Activated B cell treated with CpG ODN at 0.5 μM for 24 hours (primary cell): ENCODE measurements at regions of chr1 and their contacts with region 1.

Region 1: GRCh38 chr1:185990565-185990964 is 256.4 kb downstream of the HMCN1 start:
- DNase-seq: no peak
- ATAC-seq: no peak
- H3K4me3 Mint-ChIP-seq: no peak overlapping the region
- H3K27ac Mint-ChIP-seq: no peak overlapping the region
- H3K4me1 Mint-ChIP-seq: peaks cover 15% of the 10 kb centered on the region
- H3K27me3 Mint-ChIP-seq: peaks cover 2% of the 10 kb centered on the region
- CTCF ChIP-seq: no peak

Region 2: GRCh38 chr1:185804206-185804605 is 186.4 kb before region 1 on chr1:
- CTCF ChIA-PET with region 1: no interaction called
- POLR2A ChIA-PET with region 1: no interaction called
- intact Hi-C with region 1: no loop called
- DNase-seq: no peak
- ATAC-seq: no peak
- H3K4me3 Mint-ChIP-seq: no peak overlapping the region
- H3K27ac Mint-ChIP-seq: no peak overlapping the region
- H3K4me1 Mint-ChIP-seq: no peaks in the 10 kb centered on the region
- H3K27me3 Mint-ChIP-seq: peaks cover 5% of the 10 kb centered on the region
- CTCF ChIP-seq: no peak

Region 3: GRCh38 chr1:185973645-185974044 is 16.9 kb before region 1 on chr1:
- CTCF ChIA-PET with region 1: no interaction called
- POLR2A ChIA-PET with region 1: no interaction called
- intact Hi-C with region 1: no loop called
- DNase-seq: no peak
- ATAC-seq: no peak
- H3K4me3 Mint-ChIP-seq: no peak overlapping the region
- H3K27ac Mint-ChIP-seq: no peak overlapping the region
- H3K4me1 Mint-ChIP-seq: no peaks in the 10 kb centered on the region
- H3K27me3 Mint-ChIP-seq: peaks cover 4% of the 10 kb centered on the region
- CTCF ChIP-seq: no peak

Region 4: DNA sequence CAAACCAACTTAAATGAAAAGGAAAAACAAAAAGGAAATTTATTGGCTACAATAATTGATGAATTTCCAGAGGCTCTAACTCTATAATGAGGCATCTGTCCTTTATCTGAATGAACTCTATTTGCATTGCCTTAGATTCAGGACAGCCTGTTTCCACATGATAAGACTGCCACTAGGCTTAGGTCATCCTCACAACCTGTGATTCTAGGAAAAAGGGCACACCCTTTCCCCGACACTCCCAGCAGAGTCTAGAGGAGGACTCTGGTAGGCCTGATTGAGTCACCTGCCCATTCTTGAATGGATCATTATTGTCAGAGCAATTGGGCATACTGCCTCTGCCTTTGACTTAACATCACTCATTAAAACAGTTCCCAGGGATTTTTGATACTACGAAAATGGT is 121.7 kb after region 1 on chr1:
- CTCF ChIA-PET with region 1: no interaction called
- POLR2A ChIA-PET with region 1: no interaction called
- intact Hi-C with region 1: no loop called
- DNase-seq: no peak
- ATAC-seq: no peak
- H3K4me3 Mint-ChIP-seq: no peak overlapping the region
- H3K27ac Mint-ChIP-seq: no peak overlapping the region
- H3K4me1 Mint-ChIP-seq: peaks cover 8% of the 10 kb centered on the region
- H3K27me3 Mint-ChIP-seq: peaks cover 1% of the 10 kb centered on the region
- CTCF ChIP-seq: no peak

Region 5: GRCh38 chr1:187110351-187110750 is 1119.8 kb after region 1 on chr1:
- CTCF ChIA-PET with region 1: no interaction called
- POLR2A ChIA-PET with region 1: no interaction called
- intact Hi-C with region 1: loop called (anchors 5 kb)
- DNase-seq: no peak
- ATAC-seq: no peak
- H3K4me3 Mint-ChIP-seq: no peak overlapping the region
- H3K27ac Mint-ChIP-seq: no peak overlapping the region
- H3K4me1 Mint-ChIP-seq: no peaks in the 10 kb centered on the region
- H3K27me3 Mint-ChIP-seq: no peaks in the 10 kb centered on the region
- CTCF ChIP-seq: no peak

Region 6: GRCh38 chr1:187413405-187414182 is 1423.0 kb after region 1 on chr1:
- CTCF ChIA-PET with region 1: no interaction called
- POLR2A ChIA-PET with region 1: no interaction called
- intact Hi-C with region 1: no loop called
- DNase-seq: no peak
- ATAC-seq: no peak
- H3K4me3 Mint-ChIP-seq: no peak overlapping the region
- H3K27ac Mint-ChIP-seq: no peak overlapping the region
- H3K4me1 Mint-ChIP-seq: no peaks in the 10 kb centered on the region
- H3K27me3 Mint-ChIP-seq: no peaks in the 10 kb centered on the region
- CTCF ChIP-seq: no peak